Activated CD4-positive, alpha-beta T cell treated with anti-CD3 and anti-CD28 coated beads, Interleukin-2, amount 10 ng/mL, durations not matched to agents 24 days and 14 days (primary cell): ENCODE measurements at regions of chr1 and their contacts with region 1.

Region 1: GRCh38 chr1:182595641-182596240 is 6.7 kb upstream of the RNASEL start:
- DNase-seq: peak; percentile 90
- H3K4me3 Mint-ChIP-seq: no peak overlapping the region
- H3K27ac Mint-ChIP-seq: no peak overlapping the region
- H3K4me1 Mint-ChIP-seq: peaks cover 18% of the 10 kb centered on the region
- H3K27me3 Mint-ChIP-seq: peaks cover 17% of the 10 kb centered on the region

Region 2: DNA sequence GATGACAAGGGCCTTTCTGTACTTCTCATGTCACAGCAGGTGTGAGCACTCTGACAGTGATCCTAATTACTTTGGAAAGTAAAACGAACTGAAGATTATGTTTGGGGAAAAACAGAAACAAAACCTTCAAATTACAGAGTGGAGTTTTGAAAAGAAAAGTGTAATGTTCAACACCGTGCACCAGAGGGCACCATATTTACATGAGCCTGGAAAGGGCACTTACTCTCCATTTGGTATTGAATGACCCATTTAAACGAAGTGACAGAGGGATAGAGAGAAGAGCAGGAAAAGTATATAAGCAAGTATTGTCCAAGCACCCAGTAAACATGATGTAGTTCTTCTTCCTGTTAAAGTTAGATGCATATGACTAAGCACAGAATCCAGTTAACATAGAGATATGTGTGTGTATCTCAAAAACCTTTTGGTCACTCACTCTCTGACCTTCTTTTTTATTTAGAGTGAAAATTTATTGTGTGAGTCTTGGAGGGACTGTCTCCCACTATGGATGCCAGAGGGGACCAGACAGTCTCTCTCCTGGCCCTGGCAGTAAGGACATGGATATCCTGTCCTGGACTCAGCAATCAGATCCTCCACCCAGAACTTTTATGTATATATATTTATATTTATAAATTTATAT is 149.6 kb before region 1 on chr1:
- intact Hi-C with region 1: loop called (anchors 2 kb)
- DNase-seq: peak; percentile 79
- H3K4me3 Mint-ChIP-seq: no peak overlapping the region
- H3K27ac Mint-ChIP-seq: no peak overlapping the region
- H3K4me1 Mint-ChIP-seq: peaks cover 5% of the 10 kb centered on the region
- H3K27me3 Mint-ChIP-seq: peaks cover 6% of the 10 kb centered on the region

Region 3: DNA sequence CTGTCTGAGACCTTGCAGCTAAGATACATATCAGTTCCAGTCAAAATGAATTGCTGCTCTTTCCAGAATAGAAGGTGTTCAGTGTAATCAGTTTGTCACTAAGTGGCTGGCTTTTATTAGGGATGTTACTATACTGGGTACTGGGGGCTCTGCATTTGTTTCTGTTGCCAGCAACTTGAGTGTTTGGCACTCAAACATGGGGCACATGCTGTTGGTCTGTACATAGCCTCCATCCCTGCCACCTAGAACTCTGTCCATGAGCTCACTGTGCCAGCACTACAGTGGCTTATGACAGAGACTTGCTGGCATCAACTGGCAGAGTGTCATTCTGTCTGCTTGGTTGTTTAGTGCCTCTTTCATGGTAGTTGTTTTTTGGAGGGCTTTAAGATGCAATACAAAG is 100.7 kb before region 1 on chr1:
- intact Hi-C with region 1: no loop called
- DNase-seq: no peak
- H3K4me3 Mint-ChIP-seq: no peak overlapping the region
- H3K27ac Mint-ChIP-seq: no peak overlapping the region
- H3K4me1 Mint-ChIP-seq: no peaks in the 10 kb centered on the region
- H3K27me3 Mint-ChIP-seq: no peaks in the 10 kb centered on the region

Region 4: GRCh38 chr1:182507665-182508064 is 88.1 kb before region 1 on chr1:
- intact Hi-C with region 1: no loop called
- DNase-seq: no peak
- H3K4me3 Mint-ChIP-seq: no peak overlapping the region
- H3K27ac Mint-ChIP-seq: no peak overlapping the region
- H3K4me1 Mint-ChIP-seq: no peaks in the 10 kb centered on the region
- H3K27me3 Mint-ChIP-seq: peaks cover 2% of the 10 kb centered on the region